ENCODE measurements at regions of chr14 and their contacts with region 1.

Region 1: GRCh38 chr14:64117671-64118402 is 176.3 kb downstream of the ESR2 start:
- DNase-seq: peak; percentile 89
- H3K4me3 Mint-ChIP-seq: peak overlapping the region; percentile 67
- H3K27ac Mint-ChIP-seq: peak overlapping the region; percentile 98
- H3K4me1 Mint-ChIP-seq: peaks cover 50% of the 10 kb centered on the region
- H3K27me3 Mint-ChIP-seq: no peaks in the 10 kb centered on the region
- CTCF ChIP-seq: no peak

Region 2: GRCh38 chr14:64005822-64006221 is 112.0 kb before region 1 on chr14:
- CTCF ChIA-PET with region 1: interaction called, 4 read pairs
- POLR2A ChIA-PET with region 1: interaction called, 4 read pairs
- intact Hi-C with region 1: loop called (anchors 1 kb)
- DNase-seq: no peak
- H3K4me3 Mint-ChIP-seq: no peak overlapping the region
- H3K27ac Mint-ChIP-seq: no peak overlapping the region
- H3K4me1 Mint-ChIP-seq: no peaks in the 10 kb centered on the region
- H3K27me3 Mint-ChIP-seq: no peaks in the 10 kb centered on the region
- CTCF ChIP-seq: no peak

Region 3: DNA sequence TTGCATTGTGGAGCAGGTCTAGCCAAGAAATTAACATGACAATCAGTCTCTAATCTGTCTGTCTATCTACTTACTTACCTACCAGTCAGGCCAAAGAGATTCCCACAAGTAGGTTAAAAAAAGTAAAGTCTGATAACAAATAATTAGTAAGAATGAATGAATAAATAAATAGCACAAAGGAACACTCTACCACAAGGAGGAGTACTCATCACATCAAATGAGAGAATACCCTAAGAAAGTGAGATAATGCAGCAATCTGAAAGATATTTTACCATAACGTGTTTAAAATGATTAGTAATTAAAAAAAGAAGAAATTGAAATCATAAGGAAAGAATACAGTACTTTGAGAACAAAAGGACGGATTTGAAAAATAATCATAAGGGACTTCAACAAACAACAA is 77.8 kb before region 1 on chr14:
- CTCF ChIA-PET with region 1: interaction called, 3 read pairs
- POLR2A ChIA-PET with region 1: interaction called, 4 read pairs
- intact Hi-C with region 1: loop called (anchors 1 kb)
- DNase-seq: peak; percentile 44
- H3K4me3 Mint-ChIP-seq: no peak overlapping the region
- H3K27ac Mint-ChIP-seq: no peak overlapping the region
- H3K4me1 Mint-ChIP-seq: peaks cover 9% of the 10 kb centered on the region
- H3K27me3 Mint-ChIP-seq: no peaks in the 10 kb centered on the region
- CTCF ChIP-seq: peak; percentile 65

Region 4: DNA sequence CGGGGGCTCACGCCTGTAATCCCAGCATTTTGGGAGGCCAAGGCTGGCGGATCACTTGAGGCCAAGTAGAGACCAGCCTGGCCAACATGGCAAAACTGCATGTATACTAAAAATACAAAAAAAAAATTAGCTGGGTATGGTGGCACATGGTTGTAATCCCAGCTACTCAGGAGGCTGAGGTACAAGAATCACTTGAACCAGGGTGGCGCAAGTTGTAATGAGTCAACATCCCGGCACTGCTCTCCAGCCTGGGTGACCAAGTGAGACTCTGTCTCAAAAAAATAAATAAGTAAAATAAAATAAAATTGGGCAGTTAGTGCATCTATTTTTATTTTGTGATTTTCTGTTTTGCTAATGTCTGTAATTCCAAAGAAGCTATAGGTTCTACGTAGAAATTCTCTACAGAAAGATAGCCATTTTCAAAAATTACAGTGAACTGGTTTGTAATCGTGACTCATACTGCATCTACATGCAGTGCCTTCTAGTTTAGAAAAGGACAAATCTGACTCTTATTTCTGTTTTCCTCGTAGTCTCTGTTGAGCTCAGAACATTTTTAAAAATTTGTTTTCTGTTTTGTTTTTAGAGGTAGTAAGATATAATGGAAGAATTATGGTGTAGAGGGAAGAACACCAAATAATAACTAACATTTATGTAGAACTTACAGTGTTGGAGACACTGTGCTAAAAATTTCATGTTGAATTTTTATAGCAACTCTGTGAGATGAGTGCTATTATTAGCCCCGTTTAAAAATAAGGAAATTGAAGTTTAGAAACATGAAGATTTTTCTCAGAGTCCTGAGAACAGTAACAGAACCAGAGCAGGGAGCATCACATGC is 63.9 kb before region 1 on chr14:
- CTCF ChIA-PET with region 1: no interaction called
- POLR2A ChIA-PET with region 1: interaction called, 12 read pairs
- intact Hi-C with region 1: no loop called
- DNase-seq: peak; percentile 89
- H3K4me3 Mint-ChIP-seq: peak overlapping the region; percentile 57
- H3K27ac Mint-ChIP-seq: peak overlapping the region; percentile 92
- H3K4me1 Mint-ChIP-seq: peaks cover 19% of the 10 kb centered on the region
- H3K27me3 Mint-ChIP-seq: no peaks in the 10 kb centered on the region
- CTCF ChIP-seq: no peak

Region 5: DNA sequence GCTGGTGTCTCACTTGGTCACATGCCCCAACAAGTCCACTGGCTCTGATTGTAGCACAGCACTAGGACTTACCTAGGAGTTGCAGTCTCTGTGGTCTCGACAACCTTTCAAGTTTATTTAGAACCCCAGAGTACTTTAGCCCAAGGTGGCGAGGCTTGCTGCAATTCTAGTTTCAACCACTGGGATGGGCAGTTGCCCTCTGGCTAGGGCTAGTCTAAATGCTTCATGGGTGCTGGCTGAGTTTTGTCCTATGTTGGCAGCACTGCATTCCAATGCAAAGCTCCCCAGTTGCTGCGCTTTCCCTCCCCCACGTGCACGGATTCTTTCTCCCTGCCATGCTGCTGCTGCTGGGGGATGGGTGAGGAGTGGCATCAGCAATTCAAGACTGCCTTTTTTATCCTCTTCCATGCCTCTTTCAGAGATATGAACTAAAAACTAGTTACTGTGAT is 57.2 kb before region 1 on chr14:
- CTCF ChIA-PET with region 1: interaction called, 21 read pairs
- POLR2A ChIA-PET with region 1: interaction called, 52 read pairs
- intact Hi-C with region 1: loop called (anchors 2 kb)
- DNase-seq: peak; percentile 95
- H3K4me3 Mint-ChIP-seq: no peak overlapping the region
- H3K27ac Mint-ChIP-seq: peak overlapping the region; percentile 98
- H3K4me1 Mint-ChIP-seq: peaks cover 17% of the 10 kb centered on the region
- H3K27me3 Mint-ChIP-seq: no peaks in the 10 kb centered on the region
- CTCF ChIP-seq: peak; percentile 62